ENCODE measurements at regions of chr18 and their contacts with region 1.

Region 1: DNA sequence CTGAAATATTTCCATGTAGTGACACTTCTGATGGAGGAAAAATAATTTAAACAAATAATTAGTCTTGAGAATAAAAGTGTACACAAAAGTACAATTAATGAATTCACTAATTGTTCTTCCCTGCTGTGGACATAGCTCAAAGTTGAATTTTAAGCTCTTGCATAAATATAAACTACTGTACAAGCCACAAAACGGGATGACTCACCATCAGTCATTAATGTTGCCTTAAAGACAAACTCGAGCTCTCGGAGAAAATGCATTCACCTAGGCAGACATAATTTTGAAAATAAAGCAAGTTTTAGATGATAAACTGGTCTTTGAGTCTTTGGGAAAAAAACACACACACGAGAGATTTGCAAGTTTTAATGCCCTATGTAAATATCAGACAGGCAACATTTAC is 436.4 kb downstream of the ZNF521 start:
- DNase-seq: no peak
- H3K4me3 Mint-ChIP-seq: no peak overlapping the region
- H3K27ac Mint-ChIP-seq: no peak overlapping the region
- H3K4me1 Mint-ChIP-seq: peaks cover 6% of the 10 kb centered on the region
- H3K27me3 Mint-ChIP-seq: peaks cover 88% of the 10 kb centered on the region
- CTCF ChIP-seq: no peak

Region 2: GRCh38 chr18:24837066-24837465 is 78.5 kb before region 1 on chr18:
- CTCF ChIA-PET with region 1: no interaction called
- intact Hi-C with region 1: no loop called
- DNase-seq: no peak
- H3K4me3 Mint-ChIP-seq: no peak overlapping the region
- H3K27ac Mint-ChIP-seq: no peak overlapping the region
- H3K4me1 Mint-ChIP-seq: no peaks in the 10 kb centered on the region
- H3K27me3 Mint-ChIP-seq: peaks cover 71% of the 10 kb centered on the region
- CTCF ChIP-seq: no peak

Region 3: DNA sequence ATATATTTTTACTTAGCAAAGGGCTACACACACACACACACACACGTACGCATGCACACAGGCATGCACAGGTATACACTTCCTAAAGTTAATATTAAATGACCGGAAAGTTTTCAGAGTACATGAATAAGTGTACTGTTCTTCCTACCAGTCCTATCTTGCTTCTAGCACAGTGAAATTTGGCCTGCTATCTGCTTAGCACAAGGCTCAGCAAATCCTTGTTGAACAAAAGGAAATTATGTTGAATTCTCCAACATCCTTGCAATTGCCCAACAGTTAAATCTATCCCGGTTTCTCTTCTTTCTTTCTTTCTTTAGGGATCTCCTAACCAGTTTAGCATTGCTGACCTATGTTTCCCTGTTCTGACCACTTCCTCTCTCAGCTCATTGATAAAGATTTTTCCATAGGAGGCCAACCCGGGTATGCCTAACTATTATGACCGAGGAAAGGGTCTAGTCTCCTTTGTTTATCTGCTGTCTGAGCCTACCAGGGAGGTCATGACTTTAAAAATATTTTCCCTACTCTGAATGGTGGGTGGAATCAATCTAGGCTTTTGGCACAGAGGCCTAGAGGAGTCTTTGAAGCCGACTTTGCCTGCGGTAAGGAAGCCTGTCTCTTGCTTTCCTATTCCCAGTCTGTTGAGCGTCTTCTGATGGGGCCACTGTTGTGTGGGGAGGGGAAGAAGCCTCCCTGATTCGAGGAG is 54.4 kb before region 1 on chr18:
- CTCF ChIA-PET with region 1: no interaction called
- intact Hi-C with region 1: no loop called
- DNase-seq: no peak
- H3K4me3 Mint-ChIP-seq: no peak overlapping the region
- H3K27ac Mint-ChIP-seq: no peak overlapping the region
- H3K4me1 Mint-ChIP-seq: no peaks in the 10 kb centered on the region
- H3K27me3 Mint-ChIP-seq: peaks cover 92% of the 10 kb centered on the region
- CTCF ChIP-seq: no peak

Region 4: DNA sequence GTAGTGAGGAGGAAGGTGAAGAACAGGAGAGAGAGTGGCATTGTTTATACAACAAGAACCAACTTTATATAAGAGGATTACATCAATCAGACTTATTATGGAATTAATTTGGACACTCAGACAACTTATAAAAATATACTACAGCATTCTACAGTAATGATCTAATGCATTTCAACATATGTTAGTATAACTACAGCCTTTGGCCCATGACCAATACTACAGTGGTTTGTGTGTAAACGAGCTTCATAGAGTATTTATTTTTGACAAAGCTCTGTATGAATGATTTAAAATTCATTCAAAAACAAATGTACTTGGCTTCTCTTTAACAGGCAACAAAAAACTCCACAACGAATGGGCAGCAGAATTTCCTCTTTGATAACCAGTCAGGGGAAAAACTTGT is 363.6 kb after region 1 on chr18:
- CTCF ChIA-PET with region 1: no interaction called
- intact Hi-C with region 1: loop called (anchors 5 kb)
- DNase-seq: no peak
- H3K4me3 Mint-ChIP-seq: no peak overlapping the region
- H3K27ac Mint-ChIP-seq: no peak overlapping the region
- H3K4me1 Mint-ChIP-seq: no peaks in the 10 kb centered on the region
- H3K27me3 Mint-ChIP-seq: peaks cover 76% of the 10 kb centered on the region
- CTCF ChIP-seq: no peak

Measured in Calu3 (cell line).